PC-9 (cell line): ENCODE measurements at regions of chr9 and their contacts with region 1.

Region 1: DNA sequence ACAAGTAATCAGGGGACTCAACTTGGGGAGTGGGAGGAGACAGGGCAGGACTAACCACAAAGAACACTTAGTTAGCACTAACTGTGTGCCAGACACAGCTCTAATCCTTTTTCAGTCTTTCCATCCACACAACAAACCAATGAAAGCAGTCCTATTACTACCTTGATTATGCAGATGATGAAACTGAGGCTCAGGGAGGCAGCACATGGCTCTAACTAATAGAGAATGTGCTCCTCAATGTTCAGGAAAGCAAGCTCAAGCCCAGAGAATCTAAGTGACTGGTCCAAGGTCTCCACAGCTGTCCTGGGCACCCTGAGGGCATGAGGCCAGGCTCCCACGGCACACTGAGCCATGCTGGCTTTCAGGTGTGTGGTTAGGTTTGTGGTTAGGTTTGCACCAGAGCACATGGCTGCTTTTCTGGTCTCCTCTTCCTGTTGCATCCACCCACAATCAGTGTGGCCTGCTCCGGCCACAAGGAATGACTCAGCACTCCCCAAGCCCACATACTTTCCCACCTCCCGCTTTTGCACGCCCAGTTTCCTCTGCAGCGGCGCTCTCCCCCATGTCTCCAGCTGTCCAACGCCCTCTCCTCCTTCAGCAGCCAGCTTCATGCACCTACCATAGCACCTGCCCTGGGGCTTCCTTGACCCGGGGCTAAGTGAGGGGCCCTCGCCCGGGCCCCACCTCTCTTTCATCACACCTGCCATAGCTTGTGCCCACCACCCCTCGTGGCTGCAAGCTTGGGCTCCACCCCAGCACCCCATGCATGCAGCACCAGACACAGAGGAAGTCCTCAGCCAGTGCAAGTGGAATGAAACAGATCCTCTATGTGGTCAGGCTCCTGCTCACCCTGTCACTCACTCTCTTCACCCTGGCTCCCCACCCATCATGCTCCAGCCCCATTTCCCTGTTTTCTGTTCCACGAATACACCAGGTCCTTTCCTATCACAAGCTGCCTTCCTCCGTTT is 133.1 kb downstream of the GABBR2 start:
- DNase-seq: peak; percentile 90 to 94
- H3K4me3 ChIP-seq: no peak overlapping the region
- H3K27ac ChIP-seq: peak overlapping the region; percentile 85
- H3K4me1 ChIP-seq: peaks cover 22% of the 10 kb centered on the region
- H3K27me3 ChIP-seq: no peaks in the 10 kb centered on the region
- CTCF ChIP-seq: no peak

Region 2: DNA sequence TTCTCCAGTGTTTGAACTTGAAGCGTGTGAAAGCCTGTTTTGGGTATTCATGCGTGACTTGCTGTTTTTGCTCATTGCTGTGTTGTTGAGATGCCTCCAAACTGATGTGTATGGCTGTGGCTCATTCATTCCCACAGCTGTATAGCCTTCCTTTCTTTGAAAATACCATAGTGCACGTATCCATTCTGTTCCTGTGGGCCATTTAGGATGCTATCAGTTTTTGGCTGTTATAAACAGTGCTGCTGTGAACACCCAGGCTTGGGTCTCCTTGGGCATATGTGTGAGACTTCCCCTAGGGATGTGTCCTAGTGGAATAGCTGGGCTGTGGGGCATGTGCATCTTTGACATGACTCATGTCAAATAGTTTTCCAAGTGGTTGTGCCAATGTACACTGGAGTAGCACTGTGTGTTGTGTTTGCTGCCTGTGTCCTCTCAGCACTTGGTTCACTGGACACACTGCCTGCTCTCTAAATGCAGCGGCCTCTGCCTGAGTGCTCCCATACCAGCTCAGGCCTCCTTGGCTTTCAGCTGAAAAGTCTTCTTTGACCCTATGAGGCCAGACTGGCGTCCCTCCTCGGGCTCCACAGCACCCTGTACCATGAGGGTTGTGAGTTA is 217.6 kb before region 1 on chr9:
- CTCF ChIA-PET with region 1: no interaction called
- POLR2A ChIA-PET with region 1: no interaction called
- intact Hi-C with region 1: no loop called
- DNase-seq: no peak
- H3K4me3 ChIP-seq: no peak overlapping the region
- H3K27ac ChIP-seq: no peak overlapping the region
- H3K4me1 ChIP-seq: no peaks in the 10 kb centered on the region
- H3K27me3 ChIP-seq: no peaks in the 10 kb centered on the region
- CTCF ChIP-seq: no peak

Region 3: DNA sequence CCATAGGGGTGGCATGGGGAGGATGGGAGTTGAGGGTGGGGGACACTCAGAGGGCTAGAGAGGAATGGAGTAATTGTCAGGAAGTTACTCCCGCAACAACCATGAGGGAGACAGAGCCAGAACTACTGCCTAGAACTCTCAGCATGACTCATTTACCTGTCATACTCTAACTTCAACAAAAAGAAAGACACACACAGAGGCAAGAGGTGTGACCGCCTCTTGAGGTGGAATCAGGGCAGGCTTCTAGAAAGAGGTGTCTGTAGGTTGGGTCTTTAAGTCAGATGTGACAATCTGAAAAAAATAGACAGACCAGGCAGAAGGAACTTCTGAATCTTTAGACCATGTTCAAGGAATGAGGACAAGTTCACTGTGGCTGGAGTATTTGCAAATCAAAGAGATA is 59.7 kb after region 1 on chr9:
- CTCF ChIA-PET with region 1: no interaction called
- POLR2A ChIA-PET with region 1: no interaction called
- intact Hi-C with region 1: loop called (anchors 1 kb)
- DNase-seq: peak; percentile 15 to 57
- H3K4me3 ChIP-seq: no peak overlapping the region
- H3K27ac ChIP-seq: no peak overlapping the region
- H3K4me1 ChIP-seq: peaks cover 6% of the 10 kb centered on the region
- H3K27me3 ChIP-seq: no peaks in the 10 kb centered on the region
- CTCF ChIP-seq: no peak

Region 4: GRCh38 chr9:98686961-98687855 is 111.5 kb after region 1 on chr9:
- CTCF ChIA-PET with region 1: no interaction called
- POLR2A ChIA-PET with region 1: no interaction called
- intact Hi-C with region 1: loop called (anchors 1 kb)
- DNase-seq: peak; percentile 87 to 95
- H3K4me3 ChIP-seq: no peak overlapping the region
- H3K27ac ChIP-seq: peak overlapping the region; percentile 94
- H3K4me1 ChIP-seq: peaks cover 41% of the 10 kb centered on the region
- H3K27me3 ChIP-seq: no peaks in the 10 kb centered on the region
- CTCF ChIP-seq: no peak

Region 5: DNA sequence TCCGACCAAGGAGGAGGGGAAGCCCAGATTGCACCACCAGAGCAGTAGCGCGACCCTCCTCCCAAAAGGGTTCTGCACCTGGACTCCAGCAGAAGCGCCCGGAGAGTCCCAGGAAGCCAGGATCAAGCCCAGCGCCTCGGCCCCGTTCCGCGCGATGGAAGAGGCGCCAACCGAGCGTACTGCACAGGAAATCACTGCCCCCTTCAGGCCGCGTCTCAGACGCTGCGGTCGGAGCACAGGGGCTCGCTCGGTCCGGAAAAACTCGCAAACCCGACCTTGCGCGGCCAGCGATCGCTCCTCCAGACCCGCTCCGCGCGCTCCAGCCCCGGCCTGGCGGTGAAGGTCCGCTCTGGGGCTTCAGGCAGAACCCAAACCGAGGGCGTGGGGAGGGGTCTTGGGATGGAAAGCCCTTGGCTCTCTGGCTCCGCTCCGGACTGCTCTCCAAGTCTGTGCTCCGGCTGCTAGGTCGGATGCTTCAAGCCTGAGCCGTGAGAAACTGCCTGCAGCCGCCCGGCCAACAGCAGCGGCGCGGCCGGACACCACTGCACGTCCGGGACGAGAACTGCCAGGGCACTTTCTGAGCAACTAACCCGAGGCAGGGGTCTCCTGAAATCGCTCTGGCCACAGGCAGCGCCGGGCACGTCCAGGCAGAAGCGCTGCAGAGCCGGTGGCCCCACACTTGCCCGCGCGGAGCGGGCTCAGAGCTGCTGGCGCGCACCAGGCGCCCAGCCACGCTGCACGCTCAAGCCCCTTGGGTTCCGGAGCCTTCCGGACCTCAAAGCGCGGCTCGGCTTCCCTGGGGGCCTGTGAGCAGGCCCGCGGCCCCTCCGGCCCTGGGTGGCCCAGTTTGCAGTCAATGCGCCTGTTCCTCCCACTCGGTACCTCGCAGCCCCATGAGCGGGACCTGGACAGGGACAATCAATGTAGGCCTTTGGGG is 131.8 kb after region 1 on chr9:
- CTCF ChIA-PET with region 1: no interaction called
- POLR2A ChIA-PET with region 1: no interaction called
- intact Hi-C with region 1: loop called (anchors 1 kb)
- DNase-seq: peak; percentile 69 to 81
- H3K4me3 ChIP-seq: peak overlapping the region; percentile 60
- H3K27ac ChIP-seq: peak overlapping the region; percentile 46; the same call in 1 of the 2 replicates
- H3K4me1 ChIP-seq: peaks cover 6% of the 10 kb centered on the region
- H3K27me3 ChIP-seq: peaks cover 22% of the 10 kb centered on the region
- CTCF ChIP-seq: peak; percentile 70

Region 6: GRCh38 chr9:98796364-98797101 is 220.9 kb after region 1 on chr9 and contains the start of gene ANKS6:
- CTCF ChIA-PET with region 1: no interaction called
- POLR2A ChIA-PET with region 1: no interaction called
- intact Hi-C with region 1: loop called (anchors 10 kb)
- DNase-seq: peak in 1 of 2 experiments; percentile 87
- H3K4me3 ChIP-seq: peak within 1 kb of the TSS; percentile 64
- H3K27ac ChIP-seq: no peak within 1 kb of the TSS
- H3K4me1 ChIP-seq: peaks cover 44% of the 10 kb centered on the region
- H3K27me3 ChIP-seq: no peaks in the 10 kb centered on the region
- CTCF ChIP-seq: peak; percentile 49; the same call in 1 of the 2 replicates
- total RNA-seq, gene ANKS6: 74.7 and 87.7 TPM in 2 replicates